Endothelial cell of umbilical vein (primary cell): ENCODE measurements at regions of chrX and their contacts with region 1.

Region 1: DNA sequence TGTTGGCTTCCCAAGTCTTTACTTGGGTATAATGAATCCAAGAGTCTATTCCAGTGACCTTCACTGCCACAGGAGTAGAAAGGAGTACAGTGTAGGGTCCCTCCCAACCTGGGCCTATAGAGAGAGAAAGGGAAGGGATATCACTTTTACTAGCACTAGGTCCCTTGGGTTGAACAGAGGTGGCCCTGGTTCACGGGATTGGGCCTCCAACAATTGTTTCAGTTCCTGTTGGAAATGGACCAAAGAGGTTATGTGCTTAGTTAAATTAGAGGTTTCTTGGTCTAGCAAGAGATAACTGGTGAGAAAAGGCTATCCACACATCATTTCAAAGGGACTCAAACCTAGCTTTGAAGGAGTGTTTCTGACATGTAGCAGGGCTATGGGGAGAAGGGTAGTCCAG is 57.1 kb upstream of the MED14 start:
- DNase-seq: no peak
- H3K4me3 ChIP-seq: no peak overlapping the region
- H3K27ac ChIP-seq: no peak overlapping the region
- H3K4me1 ChIP-seq: peaks cover 6% of the 10 kb centered on the region
- H3K27me3 ChIP-seq: no peaks in the 10 kb centered on the region
- CTCF ChIP-seq: no peak
- POLR2A ChIP-seq: no peak

Region 2: GRCh38 chrX:40420899-40421729 is 371.3 kb before region 1 on chrX:
- CTCF ChIA-PET with region 1: no interaction called
- POLR2A ChIA-PET with region 1: no interaction called
- dilution Hi-C with region 1: no loop called
- intact Hi-C with region 1: no loop called
- DNase-seq: no peak
- H3K4me3 ChIP-seq: no peak overlapping the region
- H3K27ac ChIP-seq: no peak overlapping the region
- H3K4me1 ChIP-seq: no peaks in the 10 kb centered on the region
- H3K27me3 ChIP-seq: no peaks in the 10 kb centered on the region
- CTCF ChIP-seq: no peak
- POLR2A ChIP-seq: no peak

Region 3: GRCh38 chrX:40735325-40736169 is 56.9 kb before region 1 on chrX and contains the start of gene MED14:
- CTCF ChIA-PET with region 1: interaction called, 13 read pairs
- POLR2A ChIA-PET with region 1: no interaction called
- dilution Hi-C with region 1: no loop called
- intact Hi-C with region 1: loop called (anchors 2 kb)
- DNase-seq: peak; percentile 89
- H3K4me3 ChIP-seq: peak within 1 kb of the TSS; percentile 78 to 95 (median 84)
- H3K27ac ChIP-seq: peak within 1 kb of the TSS; percentile 93
- H3K4me1 ChIP-seq: peaks cover 20% of the 10 kb centered on the region
- H3K27me3 ChIP-seq: no peaks in the 10 kb centered on the region
- CTCF ChIP-seq: peak; percentile 39 to 56
- POLR2A ChIP-seq: peak; percentile 70
- total RNA-seq, gene MED14: 55.8 and 56.4 TPM in 2 replicates

Region 4: GRCh38 chrX:40867352-40867751 is 74.9 kb after region 1 on chrX:
- CTCF ChIA-PET with region 1: no interaction called
- POLR2A ChIA-PET with region 1: no interaction called
- dilution Hi-C with region 1: no loop called
- intact Hi-C with region 1: loop called (anchors 1 kb)
- DNase-seq: peak; percentile 71
- H3K4me3 ChIP-seq: no peak overlapping the region
- H3K27ac ChIP-seq: peak overlapping the region; percentile 30
- H3K4me1 ChIP-seq: peaks cover 15% of the 10 kb centered on the region
- H3K27me3 ChIP-seq: no peaks in the 10 kb centered on the region
- CTCF ChIP-seq: no peak
- POLR2A ChIP-seq: no peak

Region 5: GRCh38 chrX:40877887-40878286 is 85.5 kb after region 1 on chrX:
- CTCF ChIA-PET with region 1: interaction called, 11 read pairs
- POLR2A ChIA-PET with region 1: no interaction called
- dilution Hi-C with region 1: no loop called
- intact Hi-C with region 1: loop called (anchors 1 kb)
- DNase-seq: peak; percentile 60
- H3K4me3 ChIP-seq: no peak overlapping the region
- H3K27ac ChIP-seq: no peak overlapping the region
- H3K4me1 ChIP-seq: peaks cover 3% of the 10 kb centered on the region
- H3K27me3 ChIP-seq: no peaks in the 10 kb centered on the region
- CTCF ChIP-seq: peak; percentile 8 to 20
- POLR2A ChIP-seq: no peak

Region 6: DNA sequence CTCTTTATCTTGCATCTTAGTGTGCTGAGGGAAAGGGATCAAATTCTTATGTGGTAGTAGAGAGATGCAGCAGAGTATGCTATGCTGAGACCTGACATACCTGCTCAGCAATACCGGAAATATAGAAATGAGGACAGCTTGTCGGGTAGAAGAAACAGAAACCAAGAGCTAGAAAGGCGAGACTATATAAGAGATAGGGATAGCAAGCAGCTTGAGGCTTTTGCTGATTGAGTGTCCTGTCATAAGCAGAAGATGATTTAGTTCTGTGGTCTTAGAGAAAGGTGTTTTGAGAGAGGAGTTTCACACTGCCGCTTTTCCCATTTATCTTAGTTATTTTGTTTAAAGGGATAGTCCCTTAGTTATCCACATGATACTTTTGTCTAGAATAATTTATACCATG is 324.5 kb after region 1 on chrX:
- CTCF ChIA-PET with region 1: interaction called, 4 read pairs
- POLR2A ChIA-PET with region 1: no interaction called
- dilution Hi-C with region 1: no loop called
- intact Hi-C with region 1: loop called (anchors 1 kb)
- DNase-seq: no peak
- H3K4me3 ChIP-seq: no peak overlapping the region
- H3K27ac ChIP-seq: no peak overlapping the region
- H3K4me1 ChIP-seq: peaks cover 4% of the 10 kb centered on the region
- H3K27me3 ChIP-seq: no peaks in the 10 kb centered on the region
- CTCF ChIP-seq: no peak
- POLR2A ChIP-seq: no peak